B cell (primary cell): ENCODE measurements at regions of chr2 and their contacts with region 1.

Region 1: DNA sequence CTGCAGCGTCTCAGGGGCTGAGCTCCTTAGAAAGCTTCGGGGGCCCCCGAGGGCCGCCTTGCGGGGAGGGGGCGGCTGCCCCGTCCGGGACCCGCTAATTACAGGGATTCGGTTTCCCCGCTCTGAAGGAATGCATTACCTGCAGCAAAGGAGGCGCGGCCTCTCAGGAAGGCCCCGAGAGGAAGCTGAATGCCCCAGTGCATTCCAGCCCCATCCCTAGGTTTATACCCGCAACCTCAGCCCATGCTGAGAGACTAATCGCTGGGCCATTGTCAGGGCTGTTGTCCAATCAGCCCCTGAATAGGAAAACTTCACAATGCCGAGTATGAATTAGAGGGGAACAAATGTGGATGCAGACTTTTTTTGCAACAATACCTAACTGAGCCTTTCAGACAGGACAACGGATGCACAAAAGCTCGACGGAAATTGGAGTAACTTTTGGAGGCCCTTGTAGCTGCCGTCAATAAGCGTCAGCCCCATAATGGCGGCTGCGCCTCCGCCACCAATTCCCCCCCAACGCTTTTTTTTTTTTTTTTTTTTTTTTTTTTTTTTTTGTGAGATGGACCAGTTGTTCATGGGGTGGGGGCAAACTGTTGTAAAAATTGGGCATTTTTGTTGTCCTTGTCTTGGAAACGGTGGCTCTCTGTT is 138.6 kb upstream of the SIX3 start:
- DNase-seq: peak; percentile 41
- ATAC-seq: no peak
- H3K4me3 ChIP-seq: peak overlapping the region in 3 of 5 experiments; percentile 27 to 62 (median 35)
- H3K4me3 Mint-ChIP-seq: peak overlapping the region; percentile 74
- H3K27ac ChIP-seq: no peak overlapping the region
- H3K27ac Mint-ChIP-seq: no peak overlapping the region
- H3K4me1 ChIP-seq: peaks cover 32 to 50% of the 10 kb centered on the region in 2 donors
- H3K4me1 Mint-ChIP-seq: peaks cover 34% of the 10 kb centered on the region
- H3K27me3 ChIP-seq: peaks cover 0 to 89% (median 81%) of the 10 kb centered on the region in 4 experiments
- H3K27me3 Mint-ChIP-seq: peaks cover 87% of the 10 kb centered on the region
- CTCF ChIP-seq: no peak

Region 2: DNA sequence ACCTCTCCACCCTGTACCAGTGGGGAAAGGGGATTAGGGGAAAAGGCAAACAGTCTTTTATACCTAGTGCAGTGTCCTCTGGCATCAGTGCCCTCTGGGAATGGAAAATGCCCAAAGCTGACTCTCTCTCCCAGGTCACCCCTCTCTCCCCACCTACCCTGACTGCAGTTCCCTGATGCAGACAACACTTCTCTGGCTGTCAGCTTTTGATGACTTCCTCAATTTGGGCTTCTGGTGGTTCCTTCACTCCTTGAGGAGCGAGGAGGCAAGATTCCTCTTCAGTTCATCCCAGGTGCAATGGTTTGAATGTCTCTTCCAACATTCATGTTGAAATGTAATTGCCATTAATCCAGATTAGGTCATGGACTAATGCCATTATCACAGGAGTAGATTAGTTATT is 653.9 kb before region 1 on chr2:
- CTCF ChIA-PET with region 1: no interaction called
- POLR2A ChIA-PET with region 1: no interaction called
- intact Hi-C with region 1: no loop called
- DNase-seq: no peak
- ATAC-seq: no peak
- H3K4me3 ChIP-seq: no peak overlapping the region
- H3K4me3 Mint-ChIP-seq: no peak overlapping the region
- H3K27ac ChIP-seq: no peak overlapping the region
- H3K27ac Mint-ChIP-seq: no peak overlapping the region
- H3K4me1 ChIP-seq: no peaks in the 10 kb centered on the region
- H3K4me1 Mint-ChIP-seq: no peaks in the 10 kb centered on the region
- H3K27me3 ChIP-seq: no peaks in the 10 kb centered on the region
- H3K27me3 Mint-ChIP-seq: peaks cover 16% of the 10 kb centered on the region
- CTCF ChIP-seq: no peak

Region 3: DNA sequence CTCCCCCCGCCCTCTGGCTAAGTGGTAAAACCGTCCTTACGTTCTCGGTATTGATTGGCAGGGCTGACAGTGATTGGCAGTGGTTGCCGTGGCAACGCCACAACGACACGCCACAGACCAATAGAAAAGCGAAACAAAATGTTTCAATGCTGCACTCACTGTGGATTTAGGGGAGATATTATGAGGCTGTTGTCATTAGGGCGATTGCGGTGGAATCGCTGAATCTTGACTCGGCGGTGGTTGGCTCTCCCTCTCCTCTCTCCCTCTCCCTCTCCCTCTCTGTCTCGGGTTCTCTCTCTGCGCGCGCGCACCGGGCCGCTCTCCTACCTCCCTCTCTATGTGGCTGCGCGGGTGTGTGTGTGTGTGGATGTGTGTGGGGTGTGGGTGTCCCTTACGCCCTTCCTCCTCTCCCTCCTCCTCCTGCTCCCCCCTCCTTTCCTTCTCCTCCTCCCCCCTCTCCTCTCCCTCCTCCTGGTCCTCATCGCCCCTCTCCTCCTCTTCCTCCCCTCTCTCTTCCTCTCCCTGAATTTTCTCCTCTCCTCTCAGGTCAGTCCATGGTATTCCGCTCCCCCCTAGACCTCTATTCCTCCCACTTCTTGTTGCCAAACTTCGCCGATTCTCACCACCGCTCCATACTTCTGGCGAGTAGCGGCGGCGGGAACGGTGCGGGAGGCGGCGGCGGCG is 138.8 kb after region 1 on chr2 and contains the start of gene SIX3:
- CTCF ChIA-PET with region 1: no interaction called
- POLR2A ChIA-PET with region 1: no interaction called
- intact Hi-C with region 1: loop called (anchors 5 kb)
- DNase-seq: peak; percentile 81
- ATAC-seq: peak; percentile 54
- H3K4me3 ChIP-seq: peak within 1 kb of the TSS in 4 of 5 experiments; percentile 43 to 76 (median 59)
- H3K4me3 Mint-ChIP-seq: peak within 1 kb of the TSS; percentile 84
- H3K27ac ChIP-seq: no peak within 1 kb of the TSS
- H3K27ac Mint-ChIP-seq: peak within 1 kb of the TSS; percentile 53
- H3K4me1 ChIP-seq: peaks cover 75 to 84% of the 10 kb centered on the region in 2 donors
- H3K4me1 Mint-ChIP-seq: peaks cover 61% of the 10 kb centered on the region
- H3K27me3 ChIP-seq: peaks cover 0 to 94% (median 70%) of the 10 kb centered on the region in 4 experiments
- H3K27me3 Mint-ChIP-seq: peaks cover 68% of the 10 kb centered on the region
- CTCF ChIP-seq: no peak
- total RNA-seq, gene SIX3: not detected in 2 replicates